Adrenal gland (tissue), 19 donors: ENCODE measurements at regions of chr16 and their contacts with region 1.

Region 1: GRCh38 chr16:50079397-50080140 is 13.8 kb downstream of the HEATR3 start:
- DNase-seq: no peak
- H3K4me3 ChIP-seq: no peak overlapping the region
- H3K27ac ChIP-seq: peak overlapping the region in 1 of 5 donors; percentile 32
- H3K4me1 ChIP-seq: no peaks in the 10 kb centered on the region
- H3K27me3 ChIP-seq: no peaks in the 10 kb centered on the region
- CTCF ChIP-seq: no peak
- POLR2A ChIP-seq: no peak

Region 2: DNA sequence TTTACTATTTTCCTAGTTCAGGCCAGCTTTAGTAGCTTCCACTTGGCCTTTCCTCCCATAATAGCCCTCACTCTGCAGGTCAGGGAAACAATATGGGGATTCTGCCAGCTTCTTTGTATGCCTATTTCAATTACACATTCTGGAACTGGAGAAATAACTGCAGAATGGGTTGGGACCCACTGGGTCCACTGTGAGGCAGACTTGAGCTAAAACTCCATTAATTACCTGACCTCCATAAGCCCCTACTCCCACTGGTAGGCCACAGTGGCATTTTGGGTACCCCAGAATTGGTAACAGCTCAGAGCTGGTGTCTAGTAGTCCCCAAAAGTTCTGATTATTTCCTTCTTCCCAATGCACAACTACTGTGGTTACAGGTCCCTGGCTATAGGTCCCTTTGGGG is 56.8 kb after region 1 on chr16:
- intact Hi-C with region 1: loop called in 1 of 2 experiments (anchors 10 kb)
- DNase-seq: no peak
- H3K4me3 ChIP-seq: no peak overlapping the region
- H3K27ac ChIP-seq: no peak overlapping the region
- H3K4me1 ChIP-seq: no peaks in the 10 kb centered on the region
- H3K27me3 ChIP-seq: no peaks in the 10 kb centered on the region
- CTCF ChIP-seq: no peak
- POLR2A ChIP-seq: no peak